Panc1 (cell line): ENCODE measurements at regions of chr6 and their contacts with region 1.

Region 1: DNA sequence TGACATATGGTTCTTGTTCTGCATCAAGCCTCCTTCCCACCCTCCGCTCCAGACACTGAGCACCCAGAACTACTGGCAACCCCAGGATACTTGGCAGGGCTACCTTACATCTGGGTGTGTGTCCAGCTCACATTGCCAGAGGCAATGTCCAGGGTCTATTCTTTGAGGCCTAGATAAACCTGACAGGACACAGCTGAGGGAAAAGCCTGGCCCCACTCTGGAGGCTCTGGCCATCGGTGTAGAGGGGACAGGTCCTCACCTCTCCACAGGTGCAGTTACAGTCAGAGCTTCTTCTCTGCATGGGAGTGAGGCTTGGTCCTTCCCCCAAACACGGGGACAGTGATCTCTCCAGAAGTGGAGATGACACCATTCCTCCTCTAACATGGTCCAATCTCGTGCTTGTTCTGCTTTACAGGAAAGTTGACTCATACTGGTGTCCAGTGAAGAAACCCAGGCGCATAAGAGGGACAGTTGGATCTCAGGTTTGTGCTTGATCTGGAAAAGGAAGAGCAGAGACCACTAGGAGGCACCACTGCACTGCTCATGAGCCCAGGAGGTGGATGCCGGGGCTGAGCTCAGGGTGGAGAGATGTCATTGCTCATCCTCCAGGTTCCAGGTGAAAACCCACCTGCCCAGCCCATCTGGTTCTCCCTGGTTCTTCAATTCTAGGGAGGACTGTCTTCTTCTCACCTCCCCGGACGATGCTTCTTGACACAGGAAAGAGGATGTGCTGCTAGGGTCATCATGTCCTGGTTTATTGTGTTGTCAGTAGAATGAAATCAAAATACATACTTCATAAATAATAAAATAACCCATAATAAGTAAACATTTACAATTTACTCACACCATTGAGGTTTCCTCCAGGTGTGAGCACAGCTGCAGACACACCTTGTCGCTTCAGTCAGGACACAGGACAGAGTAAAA is 14.7 kb downstream of the HLA-F start:
- DNase-seq: peak; percentile 62
- ATAC-seq: peak; percentile 94
- H3K4me3 ChIP-seq: no peak overlapping the region
- H3K27ac ChIP-seq: no peak overlapping the region
- H3K4me1 ChIP-seq: no peaks in the 10 kb centered on the region
- H3K27me3 ChIP-seq: 0 out of 2 replicates have a peak, but pooled peaks cover 2% of the 10 kb centered on the region
- CTCF ChIP-seq: peak; percentile 87

Region 2: DNA sequence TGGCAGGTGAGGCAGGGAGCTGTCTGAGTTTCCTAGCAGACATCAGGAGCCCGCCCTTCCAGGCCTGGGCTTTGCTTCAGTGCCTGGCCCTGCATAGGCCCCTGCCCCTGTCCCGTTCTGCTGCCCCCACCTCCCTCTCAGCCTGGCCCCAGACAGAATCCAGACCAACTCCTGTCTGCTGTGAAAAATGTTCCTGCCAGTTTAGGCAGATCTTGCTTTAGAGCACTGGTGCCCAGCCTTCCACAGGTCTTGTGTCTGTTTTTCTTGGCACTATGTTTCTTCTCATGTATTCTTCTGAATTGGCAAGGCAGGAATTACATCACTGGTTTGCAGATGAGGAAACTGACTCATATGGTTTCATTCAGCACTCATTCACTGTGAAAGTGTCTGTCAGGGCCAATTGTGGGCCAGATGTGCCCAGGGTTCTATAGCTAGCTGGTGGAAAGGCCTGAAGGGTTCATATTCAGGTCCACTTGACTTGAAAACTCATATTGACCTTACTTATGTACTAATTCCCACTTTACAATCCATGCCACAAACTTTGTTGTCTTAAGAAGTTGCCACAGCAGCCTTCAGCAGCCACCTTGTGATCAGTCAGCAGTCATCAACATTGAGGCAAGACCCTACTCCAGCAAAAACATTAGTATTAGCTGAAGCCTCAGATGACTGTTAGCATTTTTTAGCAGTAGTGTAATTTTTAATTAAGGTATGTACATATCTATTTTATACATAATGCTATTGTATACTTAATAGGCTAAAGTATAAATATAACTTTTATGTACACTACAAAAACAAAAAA is 25.7 kb after region 1 on chr6:
- CTCF ChIA-PET with region 1: no interaction called
- POLR2A ChIA-PET with region 1: no interaction called
- in situ Hi-C with region 1: no loop called
- intact Hi-C with region 1: no loop called
- DNase-seq: no peak
- ATAC-seq: no peak
- H3K4me3 ChIP-seq: no peak overlapping the region
- H3K27ac ChIP-seq: no peak overlapping the region
- H3K4me1 ChIP-seq: no peaks in the 10 kb centered on the region
- H3K27me3 ChIP-seq: peaks cover 2% of the 10 kb centered on the region
- CTCF ChIP-seq: no peak

Region 3: GRCh38 chr6:30006170-30007131 is 268.5 kb after region 1 on chr6:
- CTCF ChIA-PET with region 1: no interaction called
- POLR2A ChIA-PET with region 1: no interaction called
- in situ Hi-C with region 1: no loop called
- intact Hi-C with region 1: loop called (anchors 10 kb)
- DNase-seq: no peak
- ATAC-seq: peak; percentile 58
- H3K4me3 ChIP-seq: peak overlapping the region; percentile 39 to 52
- H3K27ac ChIP-seq: no peak overlapping the region
- H3K4me1 ChIP-seq: no peaks in the 10 kb centered on the region; the same call in 1 of the 2 replicates
- H3K27me3 ChIP-seq: peaks cover 3% of the 10 kb centered on the region; the same call in 1 of the 2 replicates
- CTCF ChIP-seq: no peak